ENCODE measurements at regions of chr20 and their contacts with region 1.

Region 1: GRCh38 chr20:50070991-50071888 is 41.7 kb downstream of the UBE2V1 start:
- DNase-seq: no peak
- ATAC-seq: peak; percentile 99
- H3K4me3 ChIP-seq: peak overlapping the region; percentile 37; the same call in 1 of the 2 replicates
- H3K27ac ChIP-seq: no peak overlapping the region
- H3K4me1 ChIP-seq: peaks cover 5% of the 10 kb centered on the region
- H3K27me3 ChIP-seq: no peaks in the 10 kb centered on the region
- CTCF ChIP-seq: peak; percentile 99; a peak in 5 of 6 replicates
- EP300 ChIP-seq: no peak
- POLR2A ChIP-seq: no peak
- RAD21 ChIP-seq: peak; percentile 99

Region 2: GRCh38 chr20:49936153-49937027 is 134.8 kb before region 1 on chr20 and contains the start of gene RNF114:
- CTCF ChIA-PET with region 1: interaction called, 31 read pairs
- POLR2A ChIA-PET with region 1: no interaction called
- RAD21 ChIA-PET with region 1: interaction called, 4 read pairs
- SMC1A ChIA-PET with region 1: interaction called, 13 read pairs
- in situ Hi-C with region 1: no loop called
- intact Hi-C with region 1: no loop called
- DNase-seq: no peak
- ATAC-seq: peak; percentile 85
- H3K4me3 ChIP-seq: peak within 1 kb of the TSS; percentile 90
- H3K27ac ChIP-seq: peak within 1 kb of the TSS; percentile 85
- H3K4me1 ChIP-seq: peaks cover 17% of the 10 kb centered on the region
- H3K27me3 ChIP-seq: no peaks in the 10 kb centered on the region
- CTCF ChIP-seq: no peak; a peak in 1 of 6 replicates
- EP300 ChIP-seq: no peak; a peak in 1 of 4 replicates
- POLR2A ChIP-seq: peak; percentile 97
- RAD21 ChIP-seq: no peak
- polyA plus RNA-seq, gene RNF114: 28.0 to 33.2 TPM

Region 3: DNA sequence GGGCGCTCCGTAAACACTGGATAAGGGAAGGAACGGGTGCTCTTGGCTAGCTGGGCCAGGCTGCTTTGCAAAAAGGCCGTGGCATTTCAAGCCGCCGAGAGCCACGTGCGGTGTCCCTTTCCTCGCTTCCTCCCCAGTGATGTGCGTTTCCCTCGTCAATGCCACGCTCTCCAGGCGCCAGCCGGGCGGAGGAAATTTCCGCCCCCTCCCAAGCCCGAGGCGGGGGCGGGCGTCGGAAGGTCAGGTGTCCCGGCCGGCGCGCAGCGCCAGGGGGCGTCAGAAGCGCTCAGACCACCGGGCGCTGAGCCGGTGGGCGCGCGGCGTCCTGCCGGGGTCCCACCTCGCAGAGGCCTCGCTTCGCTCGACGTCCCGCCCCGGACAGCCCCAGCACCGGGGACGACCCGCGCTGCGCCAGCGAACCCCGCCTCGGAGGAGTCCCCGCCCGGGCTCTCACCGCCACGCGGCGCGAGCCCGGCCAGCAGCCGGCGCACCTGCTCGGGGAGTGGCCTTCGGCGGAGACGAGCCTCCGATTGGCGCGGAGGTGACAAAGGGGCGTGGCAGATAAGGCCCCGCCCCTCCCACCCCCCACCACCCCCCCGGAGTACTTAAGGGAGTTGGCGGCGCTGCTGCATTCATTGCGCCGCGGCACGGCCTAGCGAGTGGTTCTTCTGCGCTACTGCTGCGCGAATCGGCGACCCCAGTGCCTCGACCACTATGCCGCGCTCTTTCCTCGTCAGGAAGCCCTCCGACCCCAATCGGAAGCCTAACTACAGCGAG is 88.7 kb before region 1 on chr20 and contains the start of gene SNAI1:
- CTCF ChIA-PET with region 1: interaction called, 369 read pairs
- POLR2A ChIA-PET with region 1: interaction called, 3 read pairs
- RAD21 ChIA-PET with region 1: interaction called, 234 read pairs
- SMC1A ChIA-PET with region 1: interaction called, 93 read pairs
- in situ Hi-C with region 1: loop called (anchors 5 kb)
- intact Hi-C with region 1: loop called (anchors 1 kb)
- DNase-seq: peak; percentile 32
- ATAC-seq: peak; percentile 96
- H3K4me3 ChIP-seq: peak within 1 kb of the TSS; percentile 58
- H3K27ac ChIP-seq: no peak within 1 kb of the TSS
- H3K4me1 ChIP-seq: no peaks in the 10 kb centered on the region; the same call in 1 of the 2 replicates
- H3K27me3 ChIP-seq: no peaks in the 10 kb centered on the region
- CTCF ChIP-seq: peak; percentile 40 to 51 (median 42); a peak in 5 of 6 replicates
- EP300 ChIP-seq: no peak
- POLR2A ChIP-seq: peak; percentile 97
- RAD21 ChIP-seq: no peak
- polyA plus RNA-seq, gene SNAI1: not detected

Region 4: DNA sequence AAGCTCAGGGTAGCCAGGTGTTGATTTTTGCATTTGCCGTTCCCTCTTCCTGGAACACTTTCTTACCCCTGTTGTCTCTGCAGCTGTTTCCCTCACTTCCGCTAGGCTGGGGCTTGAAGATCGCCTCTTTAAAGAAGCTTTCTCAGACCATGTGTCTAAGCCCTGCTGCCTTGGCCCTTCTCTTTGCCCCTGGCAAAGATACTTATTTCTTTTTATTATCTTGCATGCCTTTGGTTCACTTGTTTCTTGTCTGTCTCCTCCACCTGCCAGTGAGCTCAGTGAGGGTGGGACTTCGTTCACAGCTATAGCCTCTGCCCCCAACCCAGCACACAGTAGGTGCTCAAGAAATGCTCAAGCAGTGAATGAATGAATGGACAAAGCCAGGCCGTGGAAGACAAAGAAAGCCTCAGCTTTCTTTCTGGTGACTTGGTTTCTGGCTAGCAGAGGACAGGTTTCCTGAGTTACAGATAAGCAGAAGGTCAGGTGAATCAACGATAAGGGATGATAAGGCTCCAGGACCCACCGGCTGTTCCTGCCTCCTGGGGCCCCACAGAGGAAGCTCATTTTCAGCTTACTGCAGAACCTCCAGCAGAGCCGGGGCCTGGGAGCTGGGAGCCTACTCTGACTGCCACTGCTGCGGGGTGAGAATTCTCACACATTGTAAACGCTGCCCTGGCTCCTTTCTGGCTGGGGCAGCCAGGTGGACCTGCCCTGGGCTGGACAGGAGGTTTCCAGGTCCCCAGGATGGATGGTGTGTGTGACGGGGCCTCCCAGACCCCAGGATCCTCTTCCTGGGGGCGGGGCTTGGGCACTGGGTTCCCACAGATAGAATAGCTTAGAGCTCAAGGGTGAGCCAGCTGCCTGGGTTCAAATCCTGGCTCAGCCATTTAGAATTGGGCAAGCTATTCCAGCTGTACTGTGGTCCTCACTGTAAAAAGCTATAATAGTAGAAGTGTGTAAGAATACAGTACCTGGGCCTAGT is 58.7 kb before region 1 on chr20:
- CTCF ChIA-PET with region 1: interaction called, 15 read pairs
- POLR2A ChIA-PET with region 1: no interaction called
- RAD21 ChIA-PET with region 1: interaction called, 15 read pairs
- SMC1A ChIA-PET with region 1: interaction called, 5 read pairs
- in situ Hi-C with region 1: no loop called
- intact Hi-C with region 1: no loop called
- DNase-seq: no peak
- ATAC-seq: peak; percentile 63
- H3K4me3 ChIP-seq: no peak overlapping the region
- H3K27ac ChIP-seq: no peak overlapping the region; the same call in 1 of the 2 replicates
- H3K4me1 ChIP-seq: peaks cover 10% of the 10 kb centered on the region
- H3K27me3 ChIP-seq: no peaks in the 10 kb centered on the region; a peak in 2 of 4 replicates
- CTCF ChIP-seq: no peak
- EP300 ChIP-seq: no peak
- POLR2A ChIP-seq: no peak
- RAD21 ChIP-seq: no peak

Region 5: GRCh38 chr20:50115591-50116372 is 44.5 kb after region 1 on chr20:
- CTCF ChIA-PET with region 1: interaction called, 14 read pairs
- POLR2A ChIA-PET with region 1: no interaction called
- RAD21 ChIA-PET with region 1: interaction called, 10 read pairs
- SMC1A ChIA-PET with region 1: interaction called, 6 read pairs
- in situ Hi-C with region 1: no loop called
- intact Hi-C with region 1: no loop called
- DNase-seq: peak; percentile 89
- ATAC-seq: peak; percentile 80
- H3K4me3 ChIP-seq: peak overlapping the region; percentile 96
- H3K27ac ChIP-seq: peak overlapping the region; percentile 65
- H3K4me1 ChIP-seq: peaks cover 22% of the 10 kb centered on the region
- H3K27me3 ChIP-seq: no peaks in the 10 kb centered on the region
- CTCF ChIP-seq: no peak
- EP300 ChIP-seq: no peak
- POLR2A ChIP-seq: peak; percentile 77
- RAD21 ChIP-seq: no peak

Region 6: DNA sequence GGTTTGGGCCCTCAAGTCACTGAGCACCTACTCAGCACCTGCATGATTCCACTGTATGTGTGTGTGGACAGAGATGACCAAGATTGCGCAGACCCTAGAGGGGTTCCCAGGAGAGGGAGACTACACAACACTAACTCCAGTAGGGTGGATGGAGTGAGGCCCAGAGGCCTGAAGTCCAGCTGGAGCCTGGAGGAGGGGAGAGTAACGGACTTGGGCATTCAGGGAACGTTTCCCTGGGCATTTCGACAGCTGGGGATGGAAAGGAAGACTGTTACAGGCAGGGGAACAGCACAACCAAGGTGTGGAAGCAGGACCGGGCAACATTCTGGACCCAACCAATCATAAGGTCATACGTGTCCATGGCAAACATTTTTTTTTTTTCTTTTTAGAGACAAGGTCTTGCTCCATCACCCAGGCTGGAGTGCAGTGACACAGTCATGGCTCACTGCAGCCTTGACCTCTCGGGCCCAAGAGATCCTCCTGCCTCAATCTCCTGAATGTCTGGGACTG is 108.3 kb after region 1 on chr20:
- CTCF ChIA-PET with region 1: interaction called, 4 read pairs
- POLR2A ChIA-PET with region 1: no interaction called
- RAD21 ChIA-PET with region 1: interaction called, 5 read pairs
- SMC1A ChIA-PET with region 1: interaction called, 10 read pairs
- in situ Hi-C with region 1: no loop called
- intact Hi-C with region 1: no loop called
- DNase-seq: no peak
- ATAC-seq: peak; percentile 44
- H3K4me3 ChIP-seq: no peak overlapping the region
- H3K27ac ChIP-seq: no peak overlapping the region
- H3K4me1 ChIP-seq: no peaks in the 10 kb centered on the region
- H3K27me3 ChIP-seq: no peaks in the 10 kb centered on the region
- CTCF ChIP-seq: no peak
- EP300 ChIP-seq: no peak
- POLR2A ChIP-seq: no peak
- RAD21 ChIP-seq: no peak